ENCODE measurements at regions of chr2 and their contacts with region 1.

Region 1: GRCh38 chr2:12606472-12607000 is 110.2 kb upstream of the TRIB2 start:
- DNase-seq: peak; percentile 66
- ATAC-seq: peak; percentile 90
- H3K4me3 ChIP-seq: no peak overlapping the region
- H3K27ac ChIP-seq: peak overlapping the region; percentile 22; the same call in 1 of the 2 replicates
- H3K4me1 ChIP-seq: peaks cover 6% of the 10 kb centered on the region
- H3K27me3 ChIP-seq: no peaks in the 10 kb centered on the region
- CTCF ChIP-seq: 0 out of 2 replicates have a peak, but pooled peaks have one; percentile 11
- POLR2A ChIP-seq: no peak
- RAD21 ChIP-seq: peak; percentile 27; the same call in 1 of the 2 replicates

Region 2: GRCh38 chr2:12326449-12327190 is 279.9 kb before region 1 on chr2:
- CTCF ChIA-PET with region 1: no interaction called
- POLR2A ChIA-PET with region 1: no interaction called
- dilution Hi-C with region 1: no loop called
- in situ Hi-C with region 1: no loop called
- intact Hi-C with region 1: no loop called
- DNase-seq: no peak
- ATAC-seq: no peak
- H3K4me3 ChIP-seq: no peak overlapping the region
- H3K27ac ChIP-seq: no peak overlapping the region
- H3K4me1 ChIP-seq: peaks cover 5% of the 10 kb centered on the region; the same call in 1 of the 2 replicates
- H3K27me3 ChIP-seq: no peaks in the 10 kb centered on the region
- CTCF ChIP-seq: no peak
- POLR2A ChIP-seq: no peak
- RAD21 ChIP-seq: no peak

Region 3: GRCh38 chr2:12685145-12685544 is 78.6 kb after region 1 on chr2:
- CTCF ChIA-PET with region 1: no interaction called
- POLR2A ChIA-PET with region 1: no interaction called
- dilution Hi-C with region 1: no loop called
- in situ Hi-C with region 1: no loop called
- intact Hi-C with region 1: loop called (anchors 5 kb)
- DNase-seq: peak; percentile 34
- ATAC-seq: no peak
- H3K4me3 ChIP-seq: no peak overlapping the region
- H3K27ac ChIP-seq: no peak overlapping the region
- H3K4me1 ChIP-seq: peaks cover 11% of the 10 kb centered on the region
- H3K27me3 ChIP-seq: no peaks in the 10 kb centered on the region
- CTCF ChIP-seq: no peak
- POLR2A ChIP-seq: no peak
- RAD21 ChIP-seq: no peak

Region 4: DNA sequence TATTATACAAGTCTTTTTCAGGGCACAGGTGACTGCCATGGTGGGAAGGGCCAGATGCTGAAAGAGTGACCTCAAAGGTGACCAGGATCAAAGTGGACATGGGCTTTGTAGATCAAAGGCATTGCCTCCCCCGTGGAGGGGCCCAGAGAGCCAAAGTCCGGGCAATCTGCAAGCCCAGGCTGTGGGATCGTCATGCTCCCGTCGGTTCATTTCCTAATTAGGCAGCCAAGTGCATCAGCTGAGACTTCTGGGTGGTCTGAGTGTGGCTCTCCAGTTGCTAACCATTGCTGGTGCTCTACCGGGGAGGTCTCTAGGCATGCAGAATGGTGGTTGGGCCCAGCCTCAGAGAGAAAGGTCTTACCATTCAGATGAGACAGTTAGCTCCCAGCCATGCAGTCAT is 171.8 kb after region 1 on chr2:
- CTCF ChIA-PET with region 1: no interaction called
- POLR2A ChIA-PET with region 1: no interaction called
- dilution Hi-C with region 1: no loop called
- in situ Hi-C with region 1: no loop called
- intact Hi-C with region 1: no loop called
- DNase-seq: no peak
- ATAC-seq: no peak
- H3K4me3 ChIP-seq: no peak overlapping the region
- H3K27ac ChIP-seq: no peak overlapping the region
- H3K4me1 ChIP-seq: peaks cover 2% of the 10 kb centered on the region; the same call in 1 of the 2 replicates
- H3K27me3 ChIP-seq: no peaks in the 10 kb centered on the region
- CTCF ChIP-seq: no peak
- POLR2A ChIP-seq: no peak
- RAD21 ChIP-seq: no peak

Measured in IMR-90 (cell line).